Gastrocnemius medialis (tissue), 4 donors: ENCODE measurements at regions of chr7 and their contacts with region 1.

Region 1: GRCh38 chr7:26365077-26365900 is 73.6 kb downstream of the SNX10 start:
- DNase-seq: peak; percentile 32 to 34
- ATAC-seq: peak; percentile 81 to 84
- H3K4me3 ChIP-seq: no peak overlapping the region
- H3K27ac ChIP-seq: no peak overlapping the region
- H3K4me1 ChIP-seq: no peaks in the 10 kb centered on the region
- H3K27me3 ChIP-seq: peaks cover 6 to 7% (median 6%) of the 10 kb centered on the region in 3 donors
- CTCF ChIP-seq: peak; percentile 62 to 79 (median 74)
- POLR2A ChIP-seq: no peak

Region 2: GRCh38 chr7:25389489-25390106 is 975.7 kb before region 1 on chr7:
- in situ Hi-C with region 1: loop called in 1 of 4 experiments (anchors 25 kb)
- intact Hi-C with region 1: no loop called
- DNase-seq: no peak
- ATAC-seq: no peak
- H3K4me3 ChIP-seq: no peak overlapping the region
- H3K27ac ChIP-seq: no peak overlapping the region
- H3K4me1 ChIP-seq: no peaks in the 10 kb centered on the region
- H3K27me3 ChIP-seq: no peaks in the 10 kb centered on the region
- CTCF ChIP-seq: peak in 2 of 5 experiments; percentile 29 to 39
- POLR2A ChIP-seq: no peak

Region 3: GRCh38 chr7:26090927-26091519 is 274.3 kb before region 1 on chr7:
- in situ Hi-C with region 1: loop called (anchors 5 to 10 kb)
- intact Hi-C with region 1: loop called (anchors 1 kb)
- DNase-seq: no peak
- ATAC-seq: no peak
- H3K4me3 ChIP-seq: no peak overlapping the region
- H3K27ac ChIP-seq: no peak overlapping the region
- H3K4me1 ChIP-seq: no peaks in the 10 kb centered on the region
- H3K27me3 ChIP-seq: no peaks in the 10 kb centered on the region
- CTCF ChIP-seq: peak; percentile 33 to 58 (median 50)
- POLR2A ChIP-seq: no peak

Region 4: GRCh38 chr7:26667500-26668133 is 302.3 kb after region 1 on chr7:
- in situ Hi-C with region 1: loop called (anchors 5 kb)
- intact Hi-C with region 1: loop called (anchors 1 kb)
- DNase-seq: peak; percentile 27 to 29
- ATAC-seq: peak; percentile 81 to 82
- H3K4me3 ChIP-seq: no peak overlapping the region
- H3K27ac ChIP-seq: no peak overlapping the region
- H3K4me1 ChIP-seq: peaks cover 0 to 5% of the 10 kb centered on the region in 2 donors
- H3K27me3 ChIP-seq: peaks cover 0 to 3% (median 0%) of the 10 kb centered on the region in 3 donors
- CTCF ChIP-seq: peak; percentile 44 to 74 (median 64)
- POLR2A ChIP-seq: no peak

Region 5: GRCh38 chr7:27143023-27143949 is 778.0 kb after region 1 on chr7 and contains the start of gene HOXA5:
- in situ Hi-C with region 1: loop called in 1 of 4 experiments (anchors 10 kb)
- intact Hi-C with region 1: no loop called
- DNase-seq: peak; percentile 76 to 80
- ATAC-seq: peak; percentile 82 to 95
- H3K4me3 ChIP-seq: peak within 1 kb of the TSS; percentile 56 to 68 (median 62)
- H3K27ac ChIP-seq: peak within 1 kb of the TSS; percentile 79 to 94 (median 88)
- H3K4me1 ChIP-seq: peaks cover 18 to 24% of the 10 kb centered on the region in 2 donors
- H3K27me3 ChIP-seq: no peaks in the 10 kb centered on the region
- CTCF ChIP-seq: peak in 4 of 5 experiments; percentile 77 to 90 (median 86)
- POLR2A ChIP-seq: peak; percentile 57 to 83
- total RNA-seq, gene HOXA5: 2.7 to 7.1 (median 7.0) TPM

Region 6: DNA sequence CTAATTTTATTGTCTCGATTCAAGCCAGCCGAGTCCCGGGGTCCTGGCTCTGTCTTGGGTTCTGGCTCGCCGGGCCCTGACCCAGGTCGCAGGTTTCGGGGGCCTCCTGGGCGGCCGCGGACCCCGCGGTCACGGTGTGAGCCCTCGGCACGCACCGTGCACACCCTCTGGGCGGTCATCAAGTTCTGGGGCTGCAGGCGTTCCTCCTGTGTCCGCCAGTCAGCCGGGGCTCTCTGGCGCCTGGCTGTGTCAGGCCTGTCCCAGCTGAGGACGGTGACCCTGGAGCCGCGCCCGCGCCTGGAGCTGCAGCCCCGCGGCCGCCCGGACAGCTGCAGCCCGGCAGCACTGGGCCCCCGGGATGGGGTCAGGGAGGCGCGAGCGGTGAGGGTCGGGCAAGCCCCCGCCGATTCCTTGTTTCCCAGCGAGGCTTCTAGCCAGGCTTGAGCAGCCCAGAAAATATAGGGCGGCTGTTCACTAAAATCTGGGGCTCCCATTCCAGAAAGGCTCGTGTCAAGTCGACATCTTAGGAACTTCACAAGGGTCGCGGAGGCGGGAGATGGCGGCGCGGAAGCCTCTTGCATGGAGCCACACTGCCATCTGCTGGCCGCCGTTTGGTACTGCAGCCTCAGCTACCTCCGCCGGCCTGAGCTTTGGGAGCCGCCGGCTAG is 795.4 kb after region 1 on chr7:
- in situ Hi-C with region 1: loop called in 2 of 4 experiments (anchors 10 kb)
- intact Hi-C with region 1: loop called (anchors 1 kb)
- DNase-seq: peak in 1 of 2 donors; percentile 85
- ATAC-seq: peak; percentile 32 to 47
- H3K4me3 ChIP-seq: peak overlapping the region; percentile 60 to 80 (median 72)
- H3K27ac ChIP-seq: peak overlapping the region; percentile 65 to 88 (median 81)
- H3K4me1 ChIP-seq: peaks cover 12 to 23% of the 10 kb centered on the region in 2 donors
- H3K27me3 ChIP-seq: no peaks in the 10 kb centered on the region
- CTCF ChIP-seq: peak; percentile 99 to 100 (median 100)
- POLR2A ChIP-seq: no peak